G401 (cell line): ENCODE measurements at regions of chr9 and their contacts with region 1.

Region 1: DNA sequence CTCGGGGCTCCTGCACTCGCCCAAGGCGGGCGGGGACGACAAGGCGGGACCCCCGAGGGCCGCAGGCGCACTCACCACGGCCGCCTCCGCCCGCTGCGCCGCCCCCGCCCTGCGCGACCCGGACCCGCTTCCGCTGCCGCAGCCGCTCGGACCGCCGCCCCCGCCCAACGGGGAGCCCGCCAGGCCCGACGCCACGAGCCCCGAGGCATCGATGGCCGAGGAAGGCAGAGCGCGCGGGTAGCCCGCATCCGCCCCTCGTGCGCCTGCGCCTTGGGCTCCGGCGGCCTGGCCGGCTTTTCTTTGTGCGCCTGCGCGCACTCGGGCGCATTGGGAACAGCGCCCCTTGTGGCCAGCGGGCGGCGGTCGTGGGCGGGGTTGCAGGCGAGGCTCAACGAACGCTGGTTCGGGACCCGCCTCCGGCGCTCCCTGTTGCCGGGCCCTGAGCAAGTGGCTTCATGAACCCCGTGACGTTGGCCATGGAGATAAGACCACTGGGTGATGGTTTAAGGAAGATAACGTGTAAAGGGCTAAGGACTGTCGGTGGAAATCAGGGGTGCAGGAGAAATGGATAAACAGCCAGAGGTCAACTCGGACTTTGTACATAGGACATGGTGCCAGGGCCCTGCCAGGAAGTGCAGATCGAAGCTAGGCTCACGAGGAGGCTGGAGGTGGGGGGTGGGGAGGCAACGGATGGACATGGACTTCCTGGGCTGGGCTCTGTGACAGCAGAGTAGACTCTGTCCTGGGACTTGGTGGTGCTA is at the starts of genes C8G and FBXW5:
- DNase-seq: peak; percentile 87
- total RNA-seq, gene C8G: 0.92 TPM in 1 of 2 replicates, not detected in the other
- total RNA-seq, gene FBXW5: 118 and 124 TPM in 2 replicates

Region 2: GRCh38 chr9:136814725-136815421 is 129.8 kb before region 1 on chr9:
- in situ Hi-C with region 1: loop called (anchors 10 kb)
- DNase-seq: no peak

Region 3: GRCh38 chr9:136885950-136886578 is 58.6 kb before region 1 on chr9 and contains the start of gene TRAF2:
- in situ Hi-C with region 1: loop called (anchors 10 kb)
- DNase-seq: peak; percentile 98
- total RNA-seq, gene TRAF2: 22.6 and 36.3 TPM in 2 replicates

Region 4: GRCh38 chr9:137007108-137007815 is 62.6 kb after region 1 on chr9:
- in situ Hi-C with region 1: no loop called
- DNase-seq: no peak

Region 5: GRCh38 chr9:137034863-137035761 is 90.4 kb after region 1 on chr9:
- in situ Hi-C with region 1: loop called (anchors 25 kb)
- DNase-seq: peak; percentile 94

Region 6: DNA sequence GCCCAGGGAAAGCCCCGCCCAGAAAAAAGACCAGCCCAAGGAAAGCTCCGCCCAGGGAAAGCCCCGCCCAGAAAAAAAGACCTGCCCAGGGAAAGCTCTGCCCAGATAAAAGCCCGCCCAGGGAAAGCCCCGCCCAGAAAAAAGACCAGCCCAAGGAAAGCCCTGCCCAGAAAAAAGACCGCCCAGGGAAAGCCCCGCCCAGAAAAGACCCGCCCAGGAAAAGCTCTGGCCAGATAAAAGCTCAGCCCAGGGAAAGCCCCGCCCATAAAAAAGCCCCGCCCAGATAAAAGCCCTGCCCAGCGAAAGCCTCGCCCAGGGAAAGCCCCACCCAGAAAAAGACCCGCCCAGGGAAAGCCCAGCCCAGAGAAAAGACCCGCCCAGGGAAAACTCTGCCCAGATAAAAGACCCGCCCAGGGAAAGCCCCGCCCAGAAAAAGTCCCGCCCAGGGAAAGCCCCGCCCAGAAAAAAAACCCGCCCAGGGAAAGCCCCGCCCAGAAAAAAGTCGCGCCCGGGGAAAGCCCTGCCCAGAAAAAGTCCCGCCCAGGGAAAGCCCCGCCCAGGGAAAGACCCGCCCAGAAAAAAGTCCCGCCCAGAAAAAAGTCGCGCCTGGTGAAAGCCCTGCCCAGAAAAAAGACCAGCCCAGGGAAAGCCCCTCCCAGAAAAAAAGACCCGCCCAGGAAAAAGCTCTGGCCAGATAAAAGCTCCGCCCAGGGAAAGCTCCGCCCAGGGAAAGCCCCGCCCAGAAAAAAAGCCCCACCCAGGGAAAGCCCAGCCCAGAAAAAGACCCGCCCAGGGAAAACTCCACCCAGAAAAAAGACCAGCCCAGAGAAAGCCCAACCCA is 206.1 kb after region 1 on chr9:
- in situ Hi-C with region 1: loop called (anchors 25 kb)
- DNase-seq: no peak